Panc1 (cell line): ENCODE measurements at regions of chr5 and their contacts with region 1.

Region 1: DNA sequence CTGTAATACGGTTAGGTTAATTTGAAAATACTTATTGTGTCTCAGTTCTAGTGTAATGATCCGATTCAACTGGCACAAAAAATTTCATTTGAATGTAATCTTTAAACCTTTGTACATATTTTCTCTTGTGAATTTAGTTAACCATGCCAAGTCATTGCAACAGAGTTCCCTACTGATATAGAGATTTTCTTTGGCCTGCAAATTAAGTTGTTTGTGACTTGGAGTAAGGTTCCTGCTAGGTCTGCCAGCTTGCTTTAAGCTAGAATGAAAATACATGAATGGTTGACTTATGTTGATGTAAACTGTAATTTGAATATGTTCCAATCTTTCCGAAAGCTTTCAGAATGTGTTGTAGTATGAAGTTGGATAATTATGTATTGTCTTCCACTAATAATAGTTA is 1004.1 kb upstream of the EDIL3 start:
- DNase-seq: no peak
- ATAC-seq: no peak
- H3K4me3 ChIP-seq: no peak overlapping the region
- H3K27ac ChIP-seq: no peak overlapping the region
- H3K4me1 ChIP-seq: no peaks in the 10 kb centered on the region
- H3K27me3 ChIP-seq: no peaks in the 10 kb centered on the region
- CTCF ChIP-seq: no peak

Region 2: DNA sequence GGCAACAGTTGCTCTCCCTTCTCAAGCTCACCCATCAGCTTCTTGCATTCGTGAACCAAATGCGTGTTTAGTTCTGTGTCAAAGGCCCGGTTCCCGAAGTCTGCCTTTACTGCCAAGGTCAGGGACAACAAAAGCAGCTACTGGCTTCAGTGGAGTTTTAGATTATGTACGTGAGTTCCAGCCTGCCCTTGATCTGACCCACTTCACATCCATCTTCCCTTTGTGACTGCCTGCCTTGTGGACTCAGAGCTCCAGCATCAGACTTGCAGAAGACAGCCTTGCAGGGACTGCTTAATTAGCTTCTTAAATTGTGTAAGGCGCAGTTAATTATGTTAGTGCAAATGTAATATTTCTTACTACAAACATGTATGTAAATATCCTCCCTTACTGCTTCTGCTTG is 229.4 kb before region 1 on chr5:
- CTCF ChIA-PET with region 1: no interaction called
- POLR2A ChIA-PET with region 1: interaction called, 13 read pairs
- in situ Hi-C with region 1: no loop called
- intact Hi-C with region 1: no loop called
- DNase-seq: no peak
- ATAC-seq: no peak
- H3K4me3 ChIP-seq: no peak overlapping the region
- H3K27ac ChIP-seq: no peak overlapping the region
- H3K4me1 ChIP-seq: no peaks in the 10 kb centered on the region
- H3K27me3 ChIP-seq: no peaks in the 10 kb centered on the region
- CTCF ChIP-seq: no peak

Region 3: DNA sequence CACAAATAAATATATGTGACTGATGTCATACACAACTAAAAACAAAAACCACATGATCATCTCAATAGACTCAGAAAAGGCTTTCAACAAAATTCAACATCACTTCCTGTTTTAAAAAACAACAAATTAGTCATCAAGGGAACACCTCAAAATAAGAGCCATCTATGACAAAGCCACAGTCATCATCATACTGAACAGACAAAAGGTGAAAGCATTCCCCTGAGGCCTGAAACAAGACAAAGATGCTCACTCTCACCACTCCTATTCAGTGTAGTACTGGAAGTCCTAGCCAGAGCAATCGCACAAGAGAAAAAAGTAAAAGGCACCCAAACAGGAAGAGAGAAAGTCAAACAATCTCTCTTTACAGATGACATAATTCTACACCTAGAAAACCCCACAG is 110.6 kb before region 1 on chr5:
- CTCF ChIA-PET with region 1: no interaction called
- POLR2A ChIA-PET with region 1: no interaction called
- in situ Hi-C with region 1: no loop called
- intact Hi-C with region 1: no loop called
- DNase-seq: no peak
- ATAC-seq: no peak
- H3K4me3 ChIP-seq: no peak overlapping the region
- H3K27ac ChIP-seq: no peak overlapping the region
- H3K4me1 ChIP-seq: no peaks in the 10 kb centered on the region
- H3K27me3 ChIP-seq: no peaks in the 10 kb centered on the region
- CTCF ChIP-seq: no peak

Region 4: GRCh38 chr5:85452322-85453025 is 63.7 kb after region 1 on chr5:
- CTCF ChIA-PET with region 1: no interaction called
- POLR2A ChIA-PET with region 1: no interaction called
- in situ Hi-C with region 1: no loop called
- intact Hi-C with region 1: no loop called
- DNase-seq: no peak
- ATAC-seq: no peak
- H3K4me3 ChIP-seq: no peak overlapping the region
- H3K27ac ChIP-seq: no peak overlapping the region
- H3K4me1 ChIP-seq: no peaks in the 10 kb centered on the region
- H3K27me3 ChIP-seq: no peaks in the 10 kb centered on the region
- CTCF ChIP-seq: no peak